Naive thymus-derived CD4-positive, alpha-beta T cell (primary cell): ENCODE measurements at regions of chr1 and their contacts with region 1.

Region 1: GRCh38 chr1:209784265-209785169 is at the start of gene C1orf74:
- DNase-seq: peak; percentile 97 to 100 (median 99)
- ATAC-seq: peak; percentile 99
- H3K4me3 ChIP-seq: peak within 1 kb of the TSS; percentile 65
- H3K4me3 Mint-ChIP-seq: peak within 1 kb of the TSS; percentile 86 to 97 (median 92)
- H3K27ac ChIP-seq: peak within 1 kb of the TSS; percentile 90
- H3K27ac Mint-ChIP-seq: peak within 1 kb of the TSS; percentile 92 to 99 (median 97)
- H3K4me1 ChIP-seq: peaks cover 11 to 19% of the 10 kb centered on the region in 2 donors
- H3K4me1 Mint-ChIP-seq: peaks cover 9 to 63% (median 37%) of the 10 kb centered on the region in 7 donors
- H3K27me3 ChIP-seq: no peaks in the 10 kb centered on the region
- H3K27me3 Mint-ChIP-seq: peaks cover 5 to 9% (median 8%) of the 10 kb centered on the region in 5 donors
- total RNA-seq, gene C1orf74: 0.51 to 1.5 (median 1.3) TPM

Region 2: DNA sequence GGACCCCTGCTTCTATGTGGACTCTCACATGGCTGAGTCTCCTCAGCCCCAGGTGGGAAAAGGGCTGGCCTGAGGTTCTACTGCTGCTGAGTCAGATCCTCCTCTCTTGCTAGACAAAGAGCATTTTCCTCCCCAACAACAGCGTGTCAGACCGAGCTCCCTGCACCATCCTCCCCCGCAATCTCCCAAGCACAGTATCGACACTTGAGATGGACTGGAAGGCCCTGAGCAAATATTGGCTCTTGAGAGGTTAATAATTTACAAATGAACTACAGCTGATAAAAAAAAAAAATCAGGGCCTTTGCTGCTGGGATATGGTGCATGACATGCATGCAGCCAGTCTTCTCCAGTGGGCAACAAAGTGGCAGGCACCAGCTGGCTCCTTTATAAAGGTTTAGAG is 256.5 kb before region 1 on chr1:
- CTCF ChIA-PET with region 1: no interaction called
- POLR2A ChIA-PET with region 1: no interaction called
- intact Hi-C with region 1: no loop called
- DNase-seq: no peak
- ATAC-seq: no peak
- H3K4me3 ChIP-seq: no peak overlapping the region
- H3K4me3 Mint-ChIP-seq: no peak overlapping the region
- H3K27ac ChIP-seq: no peak overlapping the region
- H3K27ac Mint-ChIP-seq: no peak overlapping the region
- H3K4me1 ChIP-seq: no peaks in the 10 kb centered on the region
- H3K4me1 Mint-ChIP-seq: peaks cover 0 to 2% (median 0%) of the 10 kb centered on the region in 7 donors
- H3K27me3 ChIP-seq: peaks cover 4% of the 10 kb centered on the region in 2 donors
- H3K27me3 Mint-ChIP-seq: peaks cover 38 to 52% (median 43%) of the 10 kb centered on the region in 5 donors

Region 3: DNA sequence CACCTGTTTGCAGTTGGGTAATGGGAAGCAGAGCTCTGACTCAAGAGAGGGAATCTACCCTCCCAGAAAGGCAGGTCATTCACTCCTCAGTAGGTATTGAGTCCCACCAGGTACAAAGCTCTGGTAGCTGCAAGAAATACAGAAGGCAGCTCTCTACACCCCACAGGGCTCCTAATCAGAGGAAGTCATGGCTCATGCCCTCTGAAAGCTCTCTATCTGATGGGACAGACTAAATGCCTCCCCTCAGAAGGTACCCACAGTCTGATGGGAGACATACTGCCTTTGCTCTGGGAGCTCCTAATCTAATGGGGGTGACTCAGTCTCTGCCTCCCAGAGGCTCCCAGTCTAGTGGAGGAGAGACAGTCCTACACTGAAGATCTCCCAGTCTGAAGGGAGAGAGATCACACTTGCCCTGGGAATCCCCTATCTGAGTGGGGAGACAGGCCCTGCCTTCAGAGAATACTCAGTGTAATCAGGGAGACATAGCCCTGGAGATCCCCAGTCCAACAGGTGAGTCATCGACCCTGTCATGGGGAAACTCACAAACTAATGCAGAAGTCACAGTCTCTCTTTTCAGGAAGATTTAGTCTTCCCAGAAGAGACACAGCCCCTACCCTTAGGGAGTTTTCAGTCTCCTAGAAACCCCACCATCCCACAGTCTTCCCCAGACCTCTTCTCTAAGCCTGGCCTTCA is 177.3 kb before region 1 on chr1:
- CTCF ChIA-PET with region 1: no interaction called
- POLR2A ChIA-PET with region 1: no interaction called
- intact Hi-C with region 1: no loop called
- DNase-seq: peak in 1 of 9 donors; percentile 56
- ATAC-seq: peak; percentile 71
- H3K4me3 ChIP-seq: no peak overlapping the region
- H3K4me3 Mint-ChIP-seq: no peak overlapping the region
- H3K27ac ChIP-seq: no peak overlapping the region
- H3K27ac Mint-ChIP-seq: peak overlapping the region in 1 of 9 donors; percentile 54
- H3K4me1 ChIP-seq: no peaks in the 10 kb centered on the region
- H3K4me1 Mint-ChIP-seq: peaks cover 0 to 7% (median 0%) of the 10 kb centered on the region in 7 donors
- H3K27me3 ChIP-seq: no peaks in the 10 kb centered on the region
- H3K27me3 Mint-ChIP-seq: no peaks in the 10 kb centered on the region

Region 4: GRCh38 chr1:209755926-209756614 is 28.4 kb before region 1 on chr1 and contains the start of gene TRAF3IP3:
- CTCF ChIA-PET with region 1: interaction called, 4 read pairs
- POLR2A ChIA-PET with region 1: interaction called, 1,558 read pairs
- intact Hi-C with region 1: loop called (anchors 1 kb)
- DNase-seq: peak; percentile 33 to 86 (median 84)
- ATAC-seq: peak; percentile 97
- H3K4me3 ChIP-seq: peak within 1 kb of the TSS; percentile 91
- H3K4me3 Mint-ChIP-seq: peak within 1 kb of the TSS; percentile 89 to 100 (median 98)
- H3K27ac ChIP-seq: peak within 1 kb of the TSS; percentile 83
- H3K27ac Mint-ChIP-seq: peak within 1 kb of the TSS in 7 of 9 donors; percentile 90 to 99 (median 97)
- H3K4me1 ChIP-seq: peaks cover 63 to 64% of the 10 kb centered on the region in 2 donors
- H3K4me1 Mint-ChIP-seq: peaks cover 68 to 85% (median 78%) of the 10 kb centered on the region in 7 donors
- H3K27me3 ChIP-seq: no peaks in the 10 kb centered on the region
- H3K27me3 Mint-ChIP-seq: no peaks in the 10 kb centered on the region
- total RNA-seq, gene TRAF3IP3: 303 to 746 (median 450) TPM

Region 5: DNA sequence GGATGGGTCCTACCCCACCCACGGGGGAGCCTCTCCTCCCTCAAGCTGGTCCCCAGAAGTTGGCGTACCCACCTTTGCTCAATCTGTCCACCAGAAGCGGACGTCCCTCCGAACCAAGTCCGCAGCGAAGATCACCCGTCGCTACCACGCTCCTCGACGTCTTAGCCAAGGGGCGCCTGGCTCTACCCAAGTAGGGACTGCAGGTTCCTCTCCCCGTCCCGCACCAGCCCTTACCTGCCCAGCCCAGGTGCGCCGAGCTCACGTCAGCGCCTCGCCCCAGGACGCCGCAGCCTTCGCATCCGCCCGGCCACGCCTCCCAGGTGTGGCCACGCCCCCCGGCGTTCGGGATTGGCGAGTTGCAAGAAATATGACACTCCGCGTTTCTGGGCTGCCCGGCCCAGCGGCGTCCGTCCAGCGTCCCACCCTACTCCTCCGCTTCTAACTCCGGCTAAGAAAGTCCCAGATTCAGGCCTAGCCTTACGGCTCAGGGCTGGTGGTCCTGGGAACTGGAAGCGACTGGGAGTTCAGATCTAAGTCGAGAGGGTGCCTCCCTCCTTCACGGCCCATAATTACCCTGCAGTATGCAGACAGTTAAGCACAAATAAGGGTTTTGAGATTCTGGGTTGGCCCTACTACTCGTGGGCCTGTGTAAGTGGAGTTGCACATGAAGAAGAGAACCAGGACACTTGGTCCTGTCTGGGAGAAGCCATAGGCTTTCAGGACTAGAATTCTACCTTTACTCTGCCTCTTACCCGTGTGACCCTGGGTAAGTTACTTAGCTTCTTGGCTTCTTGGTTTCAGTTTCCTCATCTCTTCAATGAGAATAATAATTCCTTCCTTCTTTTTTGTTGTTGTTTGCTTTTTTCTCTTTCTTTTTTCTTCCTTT is 21.6 kb after region 1 on chr1 and contains the start of gene IRF6:
- CTCF ChIA-PET with region 1: no interaction called
- POLR2A ChIA-PET with region 1: interaction called, 4 read pairs
- intact Hi-C with region 1: loop called in 1 of 2 experiments (anchors 1 kb)
- DNase-seq: peak in 8 of 9 donors; percentile 48 to 76 (median 70)
- ATAC-seq: peak; percentile 95
- H3K4me3 ChIP-seq: peak within 1 kb of the TSS; percentile 62
- H3K4me3 Mint-ChIP-seq: peak within 1 kb of the TSS; percentile 59 to 97 (median 90)
- H3K27ac ChIP-seq: peak within 1 kb of the TSS; percentile 14
- H3K27ac Mint-ChIP-seq: peak within 1 kb of the TSS in 8 of 9 donors; percentile 53 to 95 (median 87)
- H3K4me1 ChIP-seq: peaks cover 0 to 6% of the 10 kb centered on the region in 2 donors
- H3K4me1 Mint-ChIP-seq: peaks cover 0 to 12% (median 9%) of the 10 kb centered on the region in 7 donors
- H3K27me3 ChIP-seq: no peaks in the 10 kb centered on the region
- H3K27me3 Mint-ChIP-seq: peaks cover 0 to 16% (median 10%) of the 10 kb centered on the region in 5 donors
- total RNA-seq, gene IRF6: 0.30 to 2.3 (median 0.97) TPM in 4 of 5 experiments, not detected in the other

Region 6: DNA sequence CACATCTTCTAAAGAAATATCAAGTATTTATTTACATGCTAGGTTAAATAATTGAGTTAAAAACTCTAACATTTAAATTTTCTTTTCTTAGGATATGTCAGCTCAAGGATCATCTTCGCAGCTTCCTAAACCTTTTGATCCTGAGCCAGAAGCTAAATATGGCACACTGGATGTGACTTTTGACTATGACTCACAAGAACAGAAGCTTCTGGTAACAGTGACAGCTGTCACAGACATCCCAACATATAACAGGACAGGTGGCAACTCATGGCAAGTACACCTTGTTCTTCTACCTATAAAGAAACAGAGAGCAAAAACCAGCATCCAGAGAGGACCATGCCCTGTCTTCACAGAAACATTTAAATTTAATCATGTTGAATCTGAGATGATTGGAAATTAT is 315.4 kb after region 1 on chr1:
- CTCF ChIA-PET with region 1: no interaction called
- POLR2A ChIA-PET with region 1: no interaction called
- intact Hi-C with region 1: no loop called
- DNase-seq: no peak
- ATAC-seq: no peak
- H3K4me3 ChIP-seq: no peak overlapping the region
- H3K4me3 Mint-ChIP-seq: no peak overlapping the region
- H3K27ac ChIP-seq: no peak overlapping the region
- H3K27ac Mint-ChIP-seq: no peak overlapping the region
- H3K4me1 ChIP-seq: no peaks in the 10 kb centered on the region
- H3K4me1 Mint-ChIP-seq: no peaks in the 10 kb centered on the region
- H3K27me3 ChIP-seq: peaks cover 0 to 4% of the 10 kb centered on the region in 2 donors
- H3K27me3 Mint-ChIP-seq: peaks cover 0 to 29% (median 10%) of the 10 kb centered on the region in 5 donors